OCI-LY7 (cell line): ENCODE measurements at regions of chr1 and their contacts with region 1.

Region 1: DNA sequence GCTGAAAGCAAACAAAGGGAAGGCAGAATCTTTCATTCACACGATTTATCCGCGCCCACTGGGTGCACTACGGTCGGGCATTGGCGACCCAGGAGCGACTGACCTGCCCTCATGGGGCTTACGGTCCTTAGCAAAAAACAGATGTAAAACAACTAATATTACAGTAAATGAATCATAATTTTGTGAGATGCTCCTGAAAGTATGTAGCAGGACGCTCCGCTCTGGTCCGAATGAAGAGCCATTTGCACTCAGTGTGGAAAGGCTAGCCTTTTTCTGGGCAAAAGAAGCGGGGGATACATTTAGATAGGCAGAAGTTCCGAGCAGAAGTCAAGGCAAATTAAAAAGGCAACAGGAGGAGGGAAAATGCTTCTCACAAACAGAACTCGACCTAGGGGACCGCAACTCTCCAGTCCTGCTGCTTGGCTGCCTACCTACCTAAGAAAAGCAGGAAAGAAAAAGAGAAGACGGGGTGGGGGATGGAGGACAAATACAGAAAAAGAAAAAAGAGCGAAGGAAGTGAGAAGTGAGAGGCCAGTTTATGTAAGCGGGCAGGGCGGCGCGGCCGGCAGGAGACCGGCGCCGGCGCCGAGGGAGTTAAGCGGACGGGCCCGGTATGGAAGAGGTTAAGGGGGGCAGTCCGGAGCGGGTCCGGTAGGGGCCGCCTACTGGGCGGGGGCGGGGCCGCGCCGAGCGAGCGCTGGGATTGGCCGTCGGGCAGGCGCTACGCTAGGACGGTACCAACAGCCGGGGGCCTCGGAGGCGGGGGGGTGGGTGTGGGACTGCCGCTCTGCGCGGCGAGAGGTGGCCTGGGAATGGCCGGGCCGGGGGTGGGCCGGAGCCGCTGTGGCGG is at the start of gene FAM20B:
- DNase-seq: peak; percentile 96
- H3K4me3 ChIP-seq: peak within 1 kb of the TSS; percentile 78
- H3K27ac ChIP-seq: peak within 1 kb of the TSS; percentile 82
- H3K4me1 ChIP-seq: peaks cover 50% of the 10 kb centered on the region
- CTCF ChIP-seq: no peak
- total RNA-seq, gene FAM20B: 16.6 and 17.1 TPM in 2 replicates

Region 2: DNA sequence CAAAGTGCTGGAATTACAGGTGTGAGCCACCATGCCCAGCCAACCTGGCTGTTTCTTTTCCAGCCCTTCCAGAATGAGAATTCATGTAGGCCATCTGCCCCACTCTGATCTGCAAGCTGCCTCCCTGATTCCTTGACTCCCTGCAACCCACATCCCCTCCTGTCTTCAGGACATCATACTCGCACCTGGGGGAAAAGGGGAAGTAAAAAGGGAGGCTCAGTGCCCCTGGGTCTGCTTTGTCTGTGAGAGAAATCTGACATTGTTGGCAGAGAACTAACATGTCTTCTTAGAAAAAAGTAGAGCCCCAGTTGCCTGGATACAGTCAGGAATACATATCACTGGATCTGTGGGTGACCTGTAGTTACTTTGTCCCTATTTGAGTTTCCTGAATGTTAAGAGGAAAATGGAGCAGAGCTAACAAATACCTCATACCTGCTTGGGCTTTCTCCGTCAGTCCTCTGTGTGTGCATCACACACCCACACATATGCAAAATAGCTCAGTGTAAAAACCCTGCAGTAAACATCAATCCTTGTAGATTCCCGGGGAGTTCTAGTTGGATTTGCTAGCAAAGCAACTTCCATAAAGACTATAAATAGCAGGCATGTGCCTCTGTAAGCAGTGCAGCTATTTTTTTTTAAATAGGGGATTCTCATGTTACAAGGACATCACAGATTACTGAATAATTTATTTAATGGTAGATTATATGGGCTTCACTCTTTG is 449.6 kb before region 1 on chr1:
- CTCF ChIA-PET with region 1: no interaction called
- POLR2A ChIA-PET with region 1: interaction called, 13 read pairs
- intact Hi-C with region 1: loop called (anchors 1 kb)
- DNase-seq: peak; percentile 83
- H3K4me3 ChIP-seq: peak overlapping the region; percentile 67
- H3K27ac ChIP-seq: peak overlapping the region; percentile 99
- H3K4me1 ChIP-seq: peaks cover 91% of the 10 kb centered on the region
- CTCF ChIP-seq: no peak

Region 3: DNA sequence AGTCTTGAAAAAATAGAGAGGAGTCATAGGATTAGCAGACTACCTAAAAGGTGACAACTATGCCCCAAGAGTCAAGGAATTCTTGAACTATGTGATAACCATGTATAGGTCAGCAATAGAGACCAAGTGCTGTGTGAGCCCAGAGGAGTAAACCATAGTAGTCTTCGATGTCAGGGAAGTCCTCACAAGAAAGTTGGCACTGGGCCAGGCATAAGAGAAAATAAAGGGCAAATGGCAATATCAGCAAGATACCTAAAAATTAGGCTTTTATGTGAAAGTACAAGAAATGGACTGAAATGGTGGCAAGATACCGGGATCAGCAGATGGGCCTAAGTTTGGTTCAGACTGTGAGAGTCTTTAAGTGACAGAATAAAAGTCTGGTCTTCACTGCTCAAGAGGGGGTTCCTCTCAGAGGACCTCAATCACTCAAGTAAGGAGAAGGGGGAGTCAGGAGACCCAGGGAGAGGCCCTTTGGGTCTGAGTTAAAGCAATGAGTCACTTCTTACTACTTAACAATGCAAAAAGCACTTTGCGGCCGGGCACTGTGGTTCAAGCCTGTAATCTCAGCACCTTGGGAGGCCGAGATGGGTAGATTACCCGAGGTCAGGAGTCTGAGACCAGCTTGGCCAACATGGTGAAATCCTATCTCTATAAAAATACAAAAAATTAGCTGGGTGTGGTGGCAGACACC is 417.5 kb before region 1 on chr1:
- CTCF ChIA-PET with region 1: no interaction called
- POLR2A ChIA-PET with region 1: interaction called, 4 read pairs
- intact Hi-C with region 1: loop called (anchors 5 kb)
- DNase-seq: peak; percentile 45
- H3K4me3 ChIP-seq: no peak overlapping the region
- H3K27ac ChIP-seq: peak overlapping the region; percentile 98
- H3K4me1 ChIP-seq: peaks cover 74% of the 10 kb centered on the region
- CTCF ChIP-seq: no peak

Region 4: DNA sequence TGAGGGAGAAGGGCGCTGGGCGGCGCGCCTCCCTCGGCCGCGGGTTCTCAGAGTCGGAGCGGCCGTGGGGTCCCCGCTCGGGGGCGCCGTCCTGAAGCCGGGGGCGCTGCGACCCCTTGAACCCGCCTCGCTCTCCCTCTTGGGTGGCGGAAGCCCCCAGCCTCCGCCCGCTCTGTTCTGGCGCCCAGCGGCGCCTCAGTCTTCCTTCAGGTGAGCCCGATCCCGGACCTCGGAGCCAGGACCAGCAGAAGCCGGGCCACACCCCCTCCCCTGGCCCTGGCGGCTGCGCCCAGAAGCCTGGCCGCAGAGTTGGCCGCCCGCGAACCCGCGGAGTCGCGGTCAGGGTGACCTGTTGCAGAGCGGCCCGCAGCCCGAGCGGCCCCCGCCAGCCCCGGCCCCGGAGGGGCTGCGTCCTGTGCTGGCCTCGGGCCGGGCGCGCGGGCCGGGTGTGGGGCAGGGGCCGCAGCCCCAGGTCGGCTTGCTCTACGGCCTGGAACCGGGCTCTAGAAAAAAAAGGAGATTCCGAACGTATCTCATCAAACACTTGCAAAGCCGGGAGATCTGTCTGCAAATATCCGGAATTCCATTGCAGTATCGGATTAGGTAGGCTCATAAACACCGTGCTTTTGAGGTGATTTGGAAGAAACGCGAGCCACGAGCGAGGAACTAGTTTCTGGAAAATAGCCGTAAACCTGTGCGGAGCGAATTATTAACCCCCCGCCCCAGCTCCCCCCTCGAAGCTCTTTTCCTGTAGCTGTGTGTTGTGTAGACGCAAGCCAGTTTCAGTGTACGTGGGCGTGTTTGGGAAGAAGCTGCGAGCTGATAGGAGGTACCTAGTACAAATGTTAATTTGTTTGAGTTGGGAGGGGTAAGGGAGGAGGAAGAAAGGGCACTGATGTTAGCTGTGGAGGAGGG is 299.5 kb before region 1 on chr1:
- CTCF ChIA-PET with region 1: no interaction called
- POLR2A ChIA-PET with region 1: interaction called, 14 read pairs
- intact Hi-C with region 1: loop called (anchors 2 kb)
- DNase-seq: peak; percentile 95
- H3K4me3 ChIP-seq: peak overlapping the region; percentile 92
- H3K27ac ChIP-seq: peak overlapping the region; percentile 84
- H3K4me1 ChIP-seq: peaks cover 32% of the 10 kb centered on the region
- CTCF ChIP-seq: peak; percentile 58

Region 5: GRCh38 chr1:179014123-179014522 is 11.2 kb before region 1 on chr1:
- CTCF ChIA-PET with region 1: no interaction called
- POLR2A ChIA-PET with region 1: interaction called, 12 read pairs
- intact Hi-C with region 1: no loop called
- DNase-seq: no peak
- H3K4me3 ChIP-seq: no peak overlapping the region
- H3K27ac ChIP-seq: no peak overlapping the region
- H3K4me1 ChIP-seq: no peaks in the 10 kb centered on the region
- CTCF ChIP-seq: no peak

Region 6: DNA sequence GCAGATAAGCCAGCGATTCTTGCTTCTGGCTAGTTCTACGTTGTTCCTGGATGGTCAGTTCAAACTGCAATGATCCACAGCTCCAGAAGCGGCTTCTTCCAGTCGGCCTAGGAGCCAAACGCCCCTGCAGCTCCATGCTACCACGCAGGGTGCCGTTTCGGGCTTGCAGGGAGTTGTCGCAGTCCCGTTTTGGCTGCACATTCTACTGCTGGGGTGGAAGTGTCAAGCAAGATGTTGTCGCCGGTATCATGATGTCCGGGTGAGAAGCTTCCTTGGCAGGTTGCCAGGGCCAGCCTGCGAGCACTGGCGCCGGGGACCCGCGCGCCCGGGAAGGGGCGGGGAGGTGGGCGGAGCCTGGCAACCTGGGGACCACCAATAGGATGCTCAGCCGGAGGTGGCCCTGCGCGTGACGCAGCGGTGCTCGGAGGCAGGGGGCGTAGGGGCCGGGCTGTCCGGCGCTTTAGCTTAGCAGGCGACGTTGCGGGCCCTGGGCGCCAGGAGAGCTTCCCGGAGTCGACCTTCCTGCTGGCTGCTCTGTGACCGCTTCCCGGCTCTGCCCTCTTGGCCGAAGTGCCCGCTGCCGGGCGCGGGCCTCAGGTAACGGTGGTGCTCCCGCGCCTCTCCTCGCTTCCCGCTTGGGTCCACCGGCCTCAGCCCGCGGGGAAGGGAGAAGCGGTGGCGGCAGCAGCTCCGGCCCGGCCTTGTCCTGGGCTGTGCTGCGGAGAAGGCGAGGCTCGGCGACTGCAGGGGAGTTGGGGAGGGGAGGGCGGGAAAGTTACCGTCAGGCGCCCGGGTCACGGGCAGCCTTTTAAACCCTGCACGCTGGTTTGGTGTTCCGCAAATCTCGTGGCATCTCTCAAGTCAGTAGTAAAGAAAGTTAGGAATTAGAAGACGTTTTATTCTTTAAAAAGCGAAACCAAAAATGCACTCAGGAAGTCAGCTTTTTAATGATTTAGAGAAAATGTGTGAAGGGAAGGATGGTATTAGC is 268.3 kb after region 1 on chr1 and contains the start of gene SOAT1:
- CTCF ChIA-PET with region 1: no interaction called
- POLR2A ChIA-PET with region 1: interaction called, 4 read pairs
- intact Hi-C with region 1: loop called (anchors 5 kb)
- DNase-seq: peak; percentile 97
- H3K4me3 ChIP-seq: peak within 1 kb of the TSS; percentile 80
- H3K27ac ChIP-seq: peak within 1 kb of the TSS; percentile 63
- H3K4me1 ChIP-seq: peaks cover 42% of the 10 kb centered on the region
- CTCF ChIP-seq: 0 out of 2 replicates have a peak, but pooled peaks have one; percentile 10
- total RNA-seq, gene SOAT1: 8.7 and 11.1 TPM in 2 replicates

Region 7: DNA sequence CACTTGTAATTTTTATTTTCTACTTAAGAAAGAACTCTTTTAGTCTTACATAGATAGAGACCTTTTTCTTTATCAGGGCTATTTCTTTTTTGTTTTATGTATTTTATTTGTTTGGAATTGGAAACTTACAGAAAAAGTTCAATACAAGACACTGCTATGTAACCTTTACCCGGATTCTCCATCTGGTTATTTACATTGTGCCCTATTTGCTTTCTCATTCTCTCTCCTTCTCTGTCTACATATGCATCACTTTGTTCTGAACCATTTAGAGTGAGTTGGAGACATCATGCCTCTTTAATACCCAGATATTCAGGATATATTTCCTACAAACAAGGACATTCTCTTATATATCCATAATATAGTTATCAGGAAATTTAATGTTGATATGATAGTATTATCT is 358.7 kb after region 1 on chr1:
- CTCF ChIA-PET with region 1: no interaction called
- POLR2A ChIA-PET with region 1: no interaction called
- intact Hi-C with region 1: no loop called
- DNase-seq: no peak
- H3K4me3 ChIP-seq: no peak overlapping the region
- H3K27ac ChIP-seq: no peak overlapping the region
- H3K4me1 ChIP-seq: no peaks in the 10 kb centered on the region
- CTCF ChIP-seq: no peak